HepG2 (cell line): ENCODE measurements at regions of chr1 and their contacts with region 1.

Region 1: GRCh38 chr1:206479183-206480125 is 9.2 kb downstream of the IKBKE start:
- DNase-seq: peak; percentile 58
- ATAC-seq: peak; percentile 82
- H3K4me3 ChIP-seq: no peak overlapping the region
- H3K27ac ChIP-seq: no peak overlapping the region
- H3K4me1 ChIP-seq: no peaks in the 10 kb centered on the region
- H3K27me3 ChIP-seq: no peaks in the 10 kb centered on the region
- CTCF ChIP-seq: peak; percentile 85
- EP300 ChIP-seq: no peak
- POLR2A ChIP-seq: no peak
- RAD21 ChIP-seq: peak; percentile 50; the same call in 1 of the 2 replicates

Region 2: GRCh38 chr1:206430031-206430983 is 49.1 kb before region 1 on chr1:
- CTCF ChIA-PET with region 1: no interaction called
- POLR2A ChIA-PET with region 1: no interaction called
- in situ Hi-C with region 1: no loop called
- intact Hi-C with region 1: no loop called
- DNase-seq: no peak
- ATAC-seq: no peak
- H3K4me3 ChIP-seq: no peak overlapping the region
- H3K27ac ChIP-seq: no peak overlapping the region
- H3K4me1 ChIP-seq: no peaks in the 10 kb centered on the region
- H3K27me3 ChIP-seq: no peaks in the 10 kb centered on the region
- CTCF ChIP-seq: no peak
- EP300 ChIP-seq: no peak
- POLR2A ChIP-seq: no peak
- RAD21 ChIP-seq: no peak

Region 3: GRCh38 chr1:206464456-206464964 is 14.9 kb before region 1 on chr1:
- CTCF ChIA-PET with region 1: interaction called, 4 read pairs
- POLR2A ChIA-PET with region 1: interaction called, 16 read pairs
- in situ Hi-C with region 1: no loop called
- intact Hi-C with region 1: loop called (anchors 1 kb)
- DNase-seq: no peak
- ATAC-seq: no peak
- H3K4me3 ChIP-seq: no peak overlapping the region
- H3K27ac ChIP-seq: no peak overlapping the region
- H3K4me1 ChIP-seq: peaks cover 24% of the 10 kb centered on the region
- H3K27me3 ChIP-seq: no peaks in the 10 kb centered on the region
- CTCF ChIP-seq: no peak
- EP300 ChIP-seq: no peak
- POLR2A ChIP-seq: no peak
- RAD21 ChIP-seq: no peak